ENCODE measurements at regions of chr1 and their contacts with region 1.

Region 1: GRCh38 chr1:155540000-155540874 is 22.4 kb downstream of the ASH1L start:
- DNase-seq: peak; percentile 61
- H3K4me3 Mint-ChIP-seq: peak overlapping the region; percentile 21
- H3K27ac Mint-ChIP-seq: peak overlapping the region; percentile 82
- H3K4me1 Mint-ChIP-seq: peaks cover 43% of the 10 kb centered on the region
- H3K27me3 Mint-ChIP-seq: no peaks in the 10 kb centered on the region

Region 2: DNA sequence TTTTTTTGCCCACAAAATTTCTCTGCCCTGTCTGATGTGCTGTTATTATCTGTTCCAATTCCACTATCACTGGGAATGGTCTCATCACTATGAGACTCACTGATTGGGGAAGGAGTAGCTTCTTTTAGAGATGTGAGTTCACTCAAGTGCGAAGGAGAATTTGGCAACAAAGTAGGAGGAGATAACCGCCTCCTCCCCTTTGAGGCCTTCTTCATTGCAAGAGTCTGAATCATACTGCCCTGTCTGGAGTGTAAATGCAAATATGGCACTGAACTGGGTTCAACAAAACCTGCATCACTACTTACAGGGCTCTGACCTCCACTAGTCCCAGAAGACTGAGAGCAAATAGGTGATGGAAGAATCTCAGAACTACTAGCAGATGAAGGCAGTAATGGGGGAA is 61.0 kb before region 1 on chr1:
- intact Hi-C with region 1: no loop called
- DNase-seq: peak; percentile 50
- H3K4me3 Mint-ChIP-seq: no peak overlapping the region
- H3K27ac Mint-ChIP-seq: peak overlapping the region; percentile 30
- H3K4me1 Mint-ChIP-seq: peaks cover 13% of the 10 kb centered on the region
- H3K27me3 Mint-ChIP-seq: no peaks in the 10 kb centered on the region

Region 3: GRCh38 chr1:155562581-155563376 is 22.5 kb after region 1 on chr1 and contains the start of gene ASH1L:
- intact Hi-C with region 1: loop called (anchors 1 kb)
- DNase-seq: peak; percentile 96
- H3K4me3 Mint-ChIP-seq: peak within 1 kb of the TSS; percentile 96
- H3K27ac Mint-ChIP-seq: peak within 1 kb of the TSS; percentile 99
- H3K4me1 Mint-ChIP-seq: peaks cover 35% of the 10 kb centered on the region
- H3K27me3 Mint-ChIP-seq: no peaks in the 10 kb centered on the region
- total RNA-seq, gene ASH1L: 38.9 and 44.7 TPM in 2 replicates

Region 4: DNA sequence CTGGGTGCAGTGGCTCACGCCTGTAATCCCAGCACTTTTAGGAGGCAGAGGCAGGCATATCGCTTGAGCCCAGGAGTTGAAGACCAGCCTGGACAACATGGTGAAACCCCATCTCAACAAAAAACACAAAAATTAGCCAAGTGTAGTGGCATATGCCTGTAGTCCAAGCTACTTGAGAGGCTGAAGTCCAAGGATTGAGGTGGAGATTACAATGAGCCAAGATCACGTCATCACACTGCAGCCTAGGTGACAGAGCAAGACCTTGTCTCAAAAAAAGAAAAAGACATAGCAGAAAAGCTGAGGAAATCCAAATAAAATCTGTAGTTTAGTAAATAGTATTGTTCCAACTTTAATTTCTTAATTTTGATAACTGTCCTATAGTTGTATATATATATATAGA is 33.8 kb after region 1 on chr1:
- intact Hi-C with region 1: no loop called
- DNase-seq: no peak
- H3K4me3 Mint-ChIP-seq: no peak overlapping the region
- H3K27ac Mint-ChIP-seq: no peak overlapping the region
- H3K4me1 Mint-ChIP-seq: peaks cover 11% of the 10 kb centered on the region
- H3K27me3 Mint-ChIP-seq: no peaks in the 10 kb centered on the region